ENCODE measurements at regions of chr6 and their contacts with region 1.

Region 1: DNA sequence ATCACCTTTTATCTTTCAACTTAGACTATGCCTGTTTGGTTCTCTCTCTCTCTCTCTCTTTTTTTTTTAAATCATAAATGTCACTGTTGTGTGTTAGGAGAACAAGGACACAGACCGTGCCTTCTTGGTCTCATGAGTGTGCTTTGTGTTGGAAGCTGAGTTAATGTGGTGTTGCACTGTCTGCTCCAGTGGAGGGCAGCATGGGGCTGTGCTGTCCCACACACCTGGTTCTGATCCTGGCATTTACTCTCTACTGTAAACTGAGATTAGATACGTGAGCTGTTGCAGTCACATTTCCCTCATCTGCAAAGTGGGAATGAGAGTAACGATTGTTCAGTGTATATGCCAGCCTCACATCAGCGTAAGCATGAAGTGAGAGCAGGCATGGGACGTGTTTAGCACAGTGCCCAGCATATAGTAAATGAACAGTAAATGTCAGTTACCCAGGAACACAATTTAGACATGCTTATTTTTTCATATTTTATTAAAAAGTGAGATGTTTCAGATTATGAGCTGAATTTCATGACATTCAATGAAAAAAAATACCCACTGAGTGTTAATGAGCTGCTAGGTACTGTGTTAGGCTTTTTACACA is 161.1 kb downstream of the FARS2 start:
- DNase-seq: peak; percentile 72
- ATAC-seq: peak; percentile 100
- H3K4me3 ChIP-seq: no peak overlapping the region
- H3K27ac ChIP-seq: no peak overlapping the region
- H3K4me1 ChIP-seq: no peaks in the 10 kb centered on the region
- H3K27me3 ChIP-seq: no peaks in the 10 kb centered on the region
- CTCF ChIP-seq: peak; percentile 90

Region 2: GRCh38 chr6:5520796-5521195 is 98.4 kb after region 1 on chr6:
- CTCF ChIA-PET with region 1: interaction called, 4 read pairs
- POLR2A ChIA-PET with region 1: no interaction called
- intact Hi-C with region 1: loop called (anchors 1 kb)
- DNase-seq: no peak
- ATAC-seq: no peak
- H3K4me3 ChIP-seq: no peak overlapping the region
- H3K27ac ChIP-seq: no peak overlapping the region
- H3K4me1 ChIP-seq: no peaks in the 10 kb centered on the region
- H3K27me3 ChIP-seq: no peaks in the 10 kb centered on the region
- CTCF ChIP-seq: no peak

Region 3: DNA sequence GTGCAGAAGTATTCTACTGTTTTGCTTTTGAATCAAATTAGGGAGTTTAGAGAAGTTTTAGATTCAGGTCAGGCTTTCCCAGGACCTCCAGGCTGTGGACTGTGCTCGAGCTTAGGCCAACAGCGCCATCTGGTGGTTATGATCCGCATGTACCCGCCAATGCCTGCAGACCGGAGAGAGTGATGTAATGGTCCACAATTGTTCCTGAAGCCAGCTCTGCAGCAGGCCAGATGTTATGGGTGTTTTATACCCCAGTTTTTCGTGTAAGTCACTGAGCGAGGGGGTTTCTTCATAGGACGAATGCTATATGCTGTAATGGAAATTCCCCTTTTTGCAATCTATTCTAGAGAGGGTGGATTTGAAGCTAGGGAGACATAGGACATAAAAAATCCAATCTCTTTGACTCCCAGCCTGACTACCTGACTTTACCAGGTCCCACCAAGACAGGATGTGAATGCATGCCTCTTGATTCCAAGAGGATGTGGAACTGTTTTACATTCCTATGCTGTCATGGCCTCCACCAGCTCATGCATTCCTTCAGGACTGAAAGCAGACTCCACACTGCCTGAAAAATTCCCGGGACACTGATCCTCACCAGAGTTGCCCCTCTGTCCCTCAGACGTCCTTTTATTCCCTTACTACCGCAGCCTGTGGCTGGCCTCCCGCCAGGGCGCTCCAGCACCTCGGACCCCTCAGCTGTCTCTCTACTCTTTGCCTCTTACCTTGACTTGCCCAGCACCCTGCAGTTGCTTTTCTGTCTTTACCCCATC is 1124.9 kb after region 1 on chr6:
- CTCF ChIA-PET with region 1: no interaction called
- POLR2A ChIA-PET with region 1: no interaction called
- intact Hi-C with region 1: loop called (anchors 1 kb)
- DNase-seq: peak; percentile 90
- ATAC-seq: peak; percentile 98
- H3K4me3 ChIP-seq: peak overlapping the region; percentile 56
- H3K27ac ChIP-seq: no peak overlapping the region
- H3K4me1 ChIP-seq: 0 out of 2 replicates have a peak, but pooled peaks cover 8% of the 10 kb centered on the region
- H3K27me3 ChIP-seq: peaks cover 52% of the 10 kb centered on the region
- CTCF ChIP-seq: peak; percentile 95

Measured in PC-3 (cell line).